ENCODE measurements at regions of chr14 and their contacts with region 1.

Region 1: DNA sequence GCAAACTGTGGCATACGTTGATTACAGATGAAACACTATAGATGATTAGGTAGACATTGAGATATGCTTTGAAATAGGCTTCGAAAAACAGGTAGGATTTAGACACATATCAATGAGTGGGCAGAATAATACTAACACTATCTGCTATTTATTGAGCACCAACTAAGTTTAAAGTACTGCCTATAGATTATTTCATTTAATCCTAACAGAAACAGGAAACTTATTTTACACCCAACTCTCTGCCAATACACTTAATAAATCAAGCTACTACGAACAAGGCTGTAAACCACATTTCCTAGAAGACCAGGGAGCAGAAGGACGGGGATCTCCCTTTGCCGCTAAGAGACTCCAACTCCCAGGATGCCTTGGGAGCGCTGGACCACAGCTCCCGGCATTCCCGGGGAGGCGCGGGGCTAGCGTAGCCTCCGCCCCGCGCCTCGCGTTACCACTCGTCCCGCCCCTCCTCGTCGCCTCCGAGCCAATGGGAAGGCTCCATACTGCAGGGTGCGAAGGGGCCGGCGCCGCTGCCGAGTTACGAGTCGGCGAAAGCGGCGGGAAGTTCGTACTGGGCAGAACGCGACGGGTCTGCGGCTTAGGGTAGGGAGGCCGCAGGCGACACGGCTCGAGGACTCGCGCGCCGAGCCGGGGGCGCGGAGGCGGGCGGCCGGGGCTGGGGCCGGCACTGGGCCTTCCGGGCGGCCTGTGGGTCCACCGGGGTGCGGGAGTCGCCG is at the start of gene VRK1:
- DNase-seq: peak; percentile 98
- H3K4me3 Mint-ChIP-seq: peak within 1 kb of the TSS; percentile 97
- H3K27ac Mint-ChIP-seq: peak within 1 kb of the TSS; percentile 93
- H3K4me1 Mint-ChIP-seq: peaks cover 29% of the 10 kb centered on the region
- H3K27me3 Mint-ChIP-seq: peaks cover 7% of the 10 kb centered on the region
- total RNA-seq, gene VRK1: 76.7 and 77.0 TPM in 2 replicates

Region 2: GRCh38 chr14:96852823-96853422 is 55.9 kb after region 1 on chr14:
- intact Hi-C with region 1: loop called (anchors 5 kb)
- DNase-seq: peak; percentile 63
- H3K4me3 Mint-ChIP-seq: no peak overlapping the region
- H3K27ac Mint-ChIP-seq: no peak overlapping the region
- H3K4me1 Mint-ChIP-seq: peaks cover 14% of the 10 kb centered on the region
- H3K27me3 Mint-ChIP-seq: no peaks in the 10 kb centered on the region

Region 3: DNA sequence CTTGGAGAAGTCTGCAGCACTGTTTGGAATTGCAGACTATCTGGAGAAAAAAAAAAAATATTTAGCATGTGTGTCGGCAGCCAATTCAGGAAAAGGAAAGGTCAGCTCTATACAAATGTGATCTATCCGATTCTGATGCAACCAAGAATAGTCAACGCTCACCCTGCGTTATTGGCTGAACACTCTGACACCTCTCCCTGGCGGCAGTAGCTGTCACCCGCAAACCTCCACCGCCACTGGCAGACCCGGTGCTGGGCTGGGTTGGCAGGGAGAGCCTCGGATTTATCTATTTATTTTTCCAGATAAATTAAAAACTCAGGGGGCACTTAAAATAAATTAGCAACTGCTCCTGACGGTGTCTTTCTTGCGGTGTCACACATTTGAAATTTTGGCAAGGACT is 409.9 kb after region 1 on chr14:
- intact Hi-C with region 1: no loop called
- DNase-seq: no peak
- H3K4me3 Mint-ChIP-seq: no peak overlapping the region
- H3K27ac Mint-ChIP-seq: no peak overlapping the region
- H3K4me1 Mint-ChIP-seq: no peaks in the 10 kb centered on the region
- H3K27me3 Mint-ChIP-seq: peaks cover 15% of the 10 kb centered on the region